ENCODE measurements at regions of chr15 and their contacts with region 1.

Region 1: DNA sequence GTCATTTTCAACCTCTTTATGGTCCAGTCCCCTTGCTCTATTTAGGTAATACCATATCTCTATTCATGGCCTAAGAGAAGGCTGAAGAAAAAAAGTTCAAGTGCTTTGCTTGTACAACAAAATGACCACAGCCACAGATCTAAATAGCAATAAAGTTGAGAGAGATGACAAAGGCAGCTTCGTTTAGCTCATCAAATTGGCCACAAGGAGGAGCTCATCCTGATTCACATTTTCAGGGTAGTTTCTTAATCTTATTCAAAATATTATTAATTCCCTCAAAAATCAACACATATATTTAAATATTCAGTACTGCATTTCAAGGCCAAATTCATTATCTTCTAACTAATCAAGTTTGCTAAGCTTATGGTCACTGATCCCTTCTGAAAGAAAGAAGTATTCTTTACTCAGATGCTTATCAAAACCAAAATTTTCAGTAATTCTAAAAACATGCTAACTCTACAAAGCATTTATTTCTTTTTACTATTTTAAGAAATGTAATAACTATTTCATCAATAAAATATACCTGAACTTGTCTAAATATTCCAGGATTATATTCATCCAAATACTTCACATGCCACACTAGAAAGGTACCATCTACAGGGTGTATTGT is 85.5 kb downstream of the DMXL2 start:
- DNase-seq: peak; percentile 42
- ATAC-seq: 0 out of 2 replicates have a peak, but pooled peaks have one; percentile 60
- H3K4me3 ChIP-seq: no peak overlapping the region
- H3K27ac ChIP-seq: no peak overlapping the region
- H3K4me1 ChIP-seq: no peaks in the 10 kb centered on the region
- H3K27me3 ChIP-seq: no peaks in the 10 kb centered on the region
- CTCF ChIP-seq: peak; percentile 62
- POLR2A ChIP-seq: no peak
- RAD21 ChIP-seq: peak; percentile 40

Region 2: DNA sequence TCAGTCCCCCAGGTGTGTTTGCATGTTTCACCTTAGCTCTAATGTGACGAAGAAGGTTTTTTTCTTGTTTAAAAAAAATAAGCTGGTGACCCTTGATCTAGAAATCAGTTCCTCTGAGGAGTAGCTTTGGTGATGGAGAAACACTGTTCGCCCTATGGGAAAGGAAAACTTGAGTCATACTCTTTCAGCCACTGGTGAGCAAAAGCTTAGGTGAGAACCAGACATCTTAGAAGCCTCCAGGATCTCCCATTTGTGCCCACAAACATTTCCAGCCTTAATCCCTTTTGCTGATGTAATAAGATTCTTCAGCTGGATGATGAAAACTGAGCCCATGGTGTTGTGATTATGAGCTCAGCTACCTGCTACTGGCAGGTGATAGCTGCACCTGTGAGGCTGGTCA is 1317.2 kb before region 1 on chr15:
- CTCF ChIA-PET with region 1: no interaction called
- POLR2A ChIA-PET with region 1: no interaction called
- dilution Hi-C with region 1: no loop called
- in situ Hi-C with region 1: no loop called
- intact Hi-C with region 1: no loop called
- DNase-seq: peak; percentile 52
- ATAC-seq: no peak
- H3K4me3 ChIP-seq: no peak overlapping the region
- H3K27ac ChIP-seq: no peak overlapping the region
- H3K4me1 ChIP-seq: no peaks in the 10 kb centered on the region
- H3K27me3 ChIP-seq: peaks cover 8% of the 10 kb centered on the region
- CTCF ChIP-seq: no peak
- POLR2A ChIP-seq: no peak
- RAD21 ChIP-seq: no peak

Region 3: DNA sequence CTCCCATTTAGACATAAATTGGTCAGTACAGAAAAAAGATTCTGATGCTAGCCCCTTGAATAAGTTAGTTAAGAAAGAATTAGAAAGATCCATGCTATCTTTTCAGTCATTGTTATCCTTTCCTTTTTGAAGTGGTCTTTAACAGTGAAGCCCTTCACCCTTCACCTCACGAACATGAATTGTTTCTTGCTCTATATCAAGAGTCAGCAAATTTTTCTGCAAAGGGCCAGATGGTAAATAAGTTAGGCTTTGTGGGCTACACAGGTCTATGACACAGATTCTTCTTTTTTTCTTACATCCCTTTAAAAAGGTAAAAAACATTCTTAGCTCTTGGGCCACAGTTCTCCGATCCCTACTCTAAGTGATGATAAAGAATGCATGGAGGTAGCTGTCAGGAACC is 10.6 kb after region 1 on chr15:
- CTCF ChIA-PET with region 1: interaction called, 13 read pairs
- POLR2A ChIA-PET with region 1: no interaction called
- dilution Hi-C with region 1: no loop called
- in situ Hi-C with region 1: no loop called
- intact Hi-C with region 1: no loop called
- DNase-seq: no peak
- ATAC-seq: no peak
- H3K4me3 ChIP-seq: no peak overlapping the region
- H3K27ac ChIP-seq: no peak overlapping the region
- H3K4me1 ChIP-seq: no peaks in the 10 kb centered on the region
- H3K27me3 ChIP-seq: no peaks in the 10 kb centered on the region
- CTCF ChIP-seq: no peak
- POLR2A ChIP-seq: no peak
- RAD21 ChIP-seq: no peak

Region 4: GRCh38 chr15:51622604-51623370 is 85.7 kb after region 1 on chr15 and contains the start of gene DMXL2:
- CTCF ChIA-PET with region 1: interaction called, 5 read pairs
- POLR2A ChIA-PET with region 1: interaction called, 3 read pairs
- dilution Hi-C with region 1: no loop called
- in situ Hi-C with region 1: no loop called
- intact Hi-C with region 1: loop called (anchors 2 kb)
- DNase-seq: peak; percentile 85
- ATAC-seq: peak; percentile 76
- H3K4me3 ChIP-seq: peak within 1 kb of the TSS; percentile 83
- H3K27ac ChIP-seq: peak within 1 kb of the TSS; percentile 75
- H3K4me1 ChIP-seq: peaks cover 3% of the 10 kb centered on the region; the same call in 1 of the 2 replicates
- H3K27me3 ChIP-seq: peaks cover 7% of the 10 kb centered on the region
- CTCF ChIP-seq: 0 out of 2 replicates have a peak, but pooled peaks have one; percentile 12
- POLR2A ChIP-seq: no peak
- RAD21 ChIP-seq: no peak
- total RNA-seq, gene DMXL2: 21.9 and 34.4 TPM in 2 replicates

Region 5: DNA sequence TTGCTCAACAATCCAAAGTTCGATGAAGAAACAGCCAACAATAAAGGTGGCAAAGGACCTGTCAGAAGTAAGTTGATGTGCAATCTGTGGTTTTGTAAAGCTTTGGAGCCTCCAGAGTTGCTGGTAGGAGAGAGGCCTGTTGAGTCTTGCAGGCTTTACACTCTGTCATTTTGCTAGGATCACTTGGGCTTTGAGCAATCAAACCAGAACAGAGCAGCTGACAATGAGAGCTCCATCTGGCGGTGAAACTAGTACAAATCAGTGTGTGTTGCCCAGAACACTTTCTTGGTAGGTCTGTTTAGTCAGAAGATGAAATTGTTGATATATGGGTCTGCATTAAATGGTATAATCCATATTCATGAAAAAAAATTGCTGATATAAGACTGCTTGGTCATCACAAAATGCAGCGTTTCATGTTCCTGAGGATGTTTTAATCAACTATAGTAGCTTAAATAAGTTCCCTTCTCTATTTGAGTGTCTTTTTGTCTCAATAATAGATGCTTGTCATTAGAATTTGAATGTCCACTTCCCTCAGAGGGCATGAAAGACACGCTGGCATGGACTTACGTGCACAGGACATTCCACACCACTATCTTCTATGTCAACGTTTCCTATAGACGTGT is 240.0 kb after region 1 on chr15:
- CTCF ChIA-PET with region 1: interaction called, 4 read pairs
- POLR2A ChIA-PET with region 1: no interaction called
- dilution Hi-C with region 1: no loop called
- in situ Hi-C with region 1: no loop called
- intact Hi-C with region 1: loop called (anchors 5 kb)
- DNase-seq: peak; percentile 77
- ATAC-seq: peak; percentile 87
- H3K4me3 ChIP-seq: no peak overlapping the region
- H3K27ac ChIP-seq: no peak overlapping the region
- H3K4me1 ChIP-seq: no peaks in the 10 kb centered on the region
- H3K27me3 ChIP-seq: no peaks in the 10 kb centered on the region
- CTCF ChIP-seq: peak; percentile 72
- POLR2A ChIP-seq: no peak
- RAD21 ChIP-seq: peak; percentile 71